ENCODE measurements at regions of chr2 and their contacts with region 1.

Region 1: GRCh38 chr2:230864598-230865306 is at the start of gene ITM2C:
- DNase-seq: peak; percentile 67 to 78 (median 75)
- ATAC-seq: peak; percentile 92
- H3K4me3 ChIP-seq: peak within 1 kb of the TSS; percentile 66
- H3K4me3 Mint-ChIP-seq: peak within 1 kb of the TSS; percentile 77 to 98 (median 94)
- H3K27ac ChIP-seq: peak within 1 kb of the TSS; percentile 54
- H3K27ac Mint-ChIP-seq: peak within 1 kb of the TSS; percentile 28 to 92 (median 81)
- H3K4me1 ChIP-seq: peaks cover 24 to 27% of the 10 kb centered on the region in 2 donors
- H3K4me1 Mint-ChIP-seq: peaks cover 24 to 50% (median 46%) of the 10 kb centered on the region in 7 donors
- H3K27me3 ChIP-seq: no peaks in the 10 kb centered on the region
- H3K27me3 Mint-ChIP-seq: peaks cover 0 to 64% (median 2%) of the 10 kb centered on the region in 5 donors
- total RNA-seq, gene ITM2C: 7.4 to 27.7 (median 24.7) TPM

Region 2: DNA sequence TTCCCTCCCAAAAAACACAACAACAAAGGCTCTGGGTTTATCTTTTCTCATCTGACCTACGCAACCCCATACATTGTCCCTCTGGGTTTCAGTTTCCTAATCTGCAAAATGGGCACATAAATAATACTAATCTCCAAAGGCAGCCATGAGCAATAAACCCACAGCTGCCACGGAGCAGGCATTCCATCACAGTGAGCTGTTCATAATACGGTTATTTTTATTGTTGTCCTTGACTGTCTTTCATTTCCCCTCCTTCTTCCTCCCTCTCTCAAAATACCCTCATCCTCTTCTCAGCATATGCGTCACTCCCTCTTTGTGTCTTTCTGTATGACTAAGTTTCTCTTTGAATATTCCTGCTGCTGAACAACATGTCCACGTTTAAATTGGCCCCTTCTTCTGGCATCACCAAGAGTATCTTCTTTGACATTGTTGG is 281.9 kb before region 1 on chr2:
- CTCF ChIA-PET with region 1: no interaction called
- POLR2A ChIA-PET with region 1: no interaction called
- intact Hi-C with region 1: no loop called
- DNase-seq: no peak
- ATAC-seq: no peak
- H3K4me3 ChIP-seq: no peak overlapping the region
- H3K4me3 Mint-ChIP-seq: peak overlapping the region in 1 of 10 donors; percentile 46
- H3K27ac ChIP-seq: no peak overlapping the region
- H3K27ac Mint-ChIP-seq: peak overlapping the region in 2 of 9 donors; percentile 41 to 76
- H3K4me1 ChIP-seq: peaks cover 0 to 7% of the 10 kb centered on the region in 2 donors
- H3K4me1 Mint-ChIP-seq: peaks cover 6 to 32% (median 22%) of the 10 kb centered on the region in 7 donors
- H3K27me3 ChIP-seq: no peaks in the 10 kb centered on the region
- H3K27me3 Mint-ChIP-seq: no peaks in the 10 kb centered on the region

Region 3: GRCh38 chr2:230814616-230815015 is 50.1 kb before region 1 on chr2:
- CTCF ChIA-PET with region 1: no interaction called
- POLR2A ChIA-PET with region 1: no interaction called
- intact Hi-C with region 1: no loop called
- DNase-seq: no peak
- ATAC-seq: no peak
- H3K4me3 ChIP-seq: no peak overlapping the region
- H3K4me3 Mint-ChIP-seq: no peak overlapping the region
- H3K27ac ChIP-seq: no peak overlapping the region
- H3K27ac Mint-ChIP-seq: peak overlapping the region in 7 of 9 donors; percentile 12 to 76 (median 70)
- H3K4me1 ChIP-seq: no peaks in the 10 kb centered on the region
- H3K4me1 Mint-ChIP-seq: peaks cover 0 to 36% (median 19%) of the 10 kb centered on the region in 7 donors
- H3K27me3 ChIP-seq: no peaks in the 10 kb centered on the region
- H3K27me3 Mint-ChIP-seq: no peaks in the 10 kb centered on the region

Region 4: GRCh38 chr2:230847883-230848388 is 16.8 kb before region 1 on chr2:
- CTCF ChIA-PET with region 1: interaction called, 11 read pairs
- POLR2A ChIA-PET with region 1: no interaction called
- intact Hi-C with region 1: loop called in 1 of 2 experiments (anchors 1 kb)
- DNase-seq: peak; percentile 53 to 90 (median 75)
- ATAC-seq: peak; percentile 94
- H3K4me3 ChIP-seq: no peak overlapping the region
- H3K4me3 Mint-ChIP-seq: peak overlapping the region in 3 of 10 donors; percentile 18 to 68 (median 37)
- H3K27ac ChIP-seq: no peak overlapping the region
- H3K27ac Mint-ChIP-seq: peak overlapping the region in 1 of 9 donors; percentile 18
- H3K4me1 ChIP-seq: peaks cover 0 to 3% of the 10 kb centered on the region in 2 donors
- H3K4me1 Mint-ChIP-seq: peaks cover 3 to 12% (median 6%) of the 10 kb centered on the region in 7 donors
- H3K27me3 ChIP-seq: no peaks in the 10 kb centered on the region
- H3K27me3 Mint-ChIP-seq: peaks cover 10 to 58% (median 32%) of the 10 kb centered on the region in 5 donors

Region 5: GRCh38 chr2:230877732-230878598 is 13.2 kb after region 1 on chr2:
- CTCF ChIA-PET with region 1: interaction called, 3 read pairs
- POLR2A ChIA-PET with region 1: interaction called, 4 read pairs
- intact Hi-C with region 1: loop called in 1 of 2 experiments (anchors 1 kb)
- DNase-seq: peak in 1 of 9 donors; percentile 5
- ATAC-seq: peak; percentile 84
- H3K4me3 ChIP-seq: no peak overlapping the region
- H3K4me3 Mint-ChIP-seq: peak overlapping the region in 2 of 10 donors; percentile 29 to 37
- H3K27ac ChIP-seq: no peak overlapping the region
- H3K27ac Mint-ChIP-seq: peak overlapping the region in 1 of 9 donors; percentile 4
- H3K4me1 ChIP-seq: peaks cover 6 to 18% of the 10 kb centered on the region in 2 donors
- H3K4me1 Mint-ChIP-seq: peaks cover 0 to 15% (median 10%) of the 10 kb centered on the region in 7 donors
- H3K27me3 ChIP-seq: no peaks in the 10 kb centered on the region
- H3K27me3 Mint-ChIP-seq: no peaks in the 10 kb centered on the region

Region 6: DNA sequence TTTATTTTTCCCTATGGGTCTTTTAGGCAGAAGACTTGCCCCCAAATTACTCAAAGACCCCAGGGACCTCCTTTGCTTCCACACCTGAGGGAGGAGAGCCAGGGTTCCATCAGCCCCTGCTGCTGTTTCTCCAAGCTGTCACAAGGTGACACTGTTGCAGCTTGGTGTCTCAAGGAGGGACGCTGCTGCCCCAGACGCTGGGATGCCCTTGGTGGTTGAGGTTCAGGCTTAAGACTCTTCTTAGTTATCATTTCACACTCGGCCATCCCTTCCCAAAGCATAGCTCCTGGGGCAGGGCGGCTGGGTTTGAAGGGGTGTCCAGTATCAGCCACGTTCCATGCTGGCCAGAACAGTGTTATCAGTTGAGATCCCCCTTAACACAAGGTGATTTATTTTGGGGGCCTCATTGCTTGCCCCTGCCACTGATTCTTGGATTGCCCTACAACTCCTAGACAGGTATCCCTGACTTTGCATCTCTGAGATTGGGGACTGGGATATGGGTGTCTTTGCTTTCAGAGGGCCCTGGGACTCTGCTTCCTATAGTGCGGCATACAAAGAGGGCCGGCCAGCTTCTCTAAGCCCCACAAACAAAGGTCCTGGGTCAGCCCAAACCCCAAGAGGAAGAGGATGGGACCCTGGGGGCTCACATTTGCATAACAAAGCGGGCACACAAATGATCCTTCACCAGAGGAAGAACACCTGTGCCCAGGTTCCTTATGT is 37.6 kb after region 1 on chr2:
- CTCF ChIA-PET with region 1: interaction called, 3 read pairs
- POLR2A ChIA-PET with region 1: no interaction called
- intact Hi-C with region 1: loop called in 1 of 2 experiments (anchors 1 kb)
- DNase-seq: peak in 4 of 9 donors; percentile 22 to 49 (median 32)
- ATAC-seq: peak; percentile 71
- H3K4me3 ChIP-seq: no peak overlapping the region
- H3K4me3 Mint-ChIP-seq: no peak overlapping the region
- H3K27ac ChIP-seq: no peak overlapping the region
- H3K27ac Mint-ChIP-seq: peak overlapping the region in 1 of 9 donors; percentile 21
- H3K4me1 ChIP-seq: peaks cover 6 to 13% of the 10 kb centered on the region in 2 donors
- H3K4me1 Mint-ChIP-seq: peaks cover 2 to 25% (median 23%) of the 10 kb centered on the region in 7 donors
- H3K27me3 ChIP-seq: no peaks in the 10 kb centered on the region
- H3K27me3 Mint-ChIP-seq: peaks cover 0 to 46% (median 6%) of the 10 kb centered on the region in 5 donors

Region 7: GRCh38 chr2:230913406-230914143 is 48.8 kb after region 1 on chr2:
- CTCF ChIA-PET with region 1: interaction called, 3 read pairs
- POLR2A ChIA-PET with region 1: interaction called, 4 read pairs
- intact Hi-C with region 1: loop called in 1 of 2 experiments (anchors 1 kb)
- DNase-seq: peak in 4 of 9 donors; percentile 22 to 36 (median 29)
- ATAC-seq: peak; percentile 78
- H3K4me3 ChIP-seq: no peak overlapping the region
- H3K4me3 Mint-ChIP-seq: no peak overlapping the region
- H3K27ac ChIP-seq: no peak overlapping the region
- H3K27ac Mint-ChIP-seq: peak overlapping the region in 1 of 9 donors; percentile 7
- H3K4me1 ChIP-seq: no peaks in the 10 kb centered on the region
- H3K4me1 Mint-ChIP-seq: peaks cover 0 to 27% (median 15%) of the 10 kb centered on the region in 7 donors
- H3K27me3 ChIP-seq: no peaks in the 10 kb centered on the region
- H3K27me3 Mint-ChIP-seq: peaks cover 0 to 56% (median 3%) of the 10 kb centered on the region in 5 donors

Region 8: DNA sequence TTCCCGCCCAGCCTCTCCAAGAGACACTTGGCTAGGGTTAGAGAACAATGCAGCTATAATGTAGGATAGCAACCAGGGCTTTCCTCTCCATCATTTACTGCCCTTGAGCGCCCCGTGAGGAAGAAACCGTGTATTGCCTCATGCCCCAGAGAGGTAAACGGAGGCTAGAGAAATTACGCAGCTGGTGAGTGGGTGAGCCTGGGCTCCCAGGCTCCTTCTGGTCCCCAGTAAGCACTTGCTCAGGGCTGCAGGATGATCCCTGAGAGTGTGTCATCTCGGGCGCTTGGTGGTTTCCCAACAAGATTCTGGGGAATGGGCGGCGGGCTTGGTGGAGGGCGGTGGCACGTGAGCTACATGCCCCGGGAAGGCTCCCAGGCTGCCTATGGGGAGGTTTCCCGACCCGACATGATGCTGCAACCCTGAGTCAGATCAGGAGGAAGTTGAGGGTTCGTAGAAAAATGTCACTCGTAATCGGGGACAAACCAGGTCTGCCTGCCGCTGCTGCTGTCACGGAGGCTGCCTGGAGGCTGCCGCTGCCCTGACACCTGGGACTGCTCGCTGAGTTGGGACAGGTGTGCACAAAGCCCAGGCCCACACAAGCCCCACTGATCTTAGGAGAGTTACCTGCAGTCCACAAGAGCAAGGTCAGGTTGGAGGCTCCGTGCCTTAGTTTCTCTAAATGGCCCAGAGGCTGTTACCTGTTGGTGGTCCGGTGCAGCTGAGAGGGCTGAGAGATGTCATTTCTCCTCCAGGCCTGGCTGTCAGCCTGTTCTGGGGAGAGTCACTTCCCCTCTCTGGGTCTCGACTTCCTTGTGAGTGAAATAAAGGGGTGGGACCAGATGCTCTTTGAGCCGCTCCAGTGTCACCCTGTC is 60.0 kb after region 1 on chr2 and contains the start of gene GPR55:
- CTCF ChIA-PET with region 1: no interaction called
- POLR2A ChIA-PET with region 1: no interaction called
- intact Hi-C with region 1: loop called in 1 of 2 experiments (anchors 1 kb)
- DNase-seq: peak in 7 of 9 donors; percentile 27 to 68 (median 39)
- ATAC-seq: peak; percentile 78
- H3K4me3 ChIP-seq: peak within 1 kb of the TSS; percentile 63
- H3K4me3 Mint-ChIP-seq: peak within 1 kb of the TSS; percentile 80 to 89 (median 86)
- H3K27ac ChIP-seq: peak within 1 kb of the TSS; percentile 58
- H3K27ac Mint-ChIP-seq: peak within 1 kb of the TSS; percentile 58 to 92 (median 86)
- H3K4me1 ChIP-seq: peaks cover 5 to 11% of the 10 kb centered on the region in 2 donors
- H3K4me1 Mint-ChIP-seq: peaks cover 28 to 50% (median 38%) of the 10 kb centered on the region in 7 donors
- H3K27me3 ChIP-seq: no peaks in the 10 kb centered on the region
- H3K27me3 Mint-ChIP-seq: peaks cover 0 to 30% (median 0%) of the 10 kb centered on the region in 5 donors
- total RNA-seq, gene GPR55: 1.3 to 8.8 (median 2.5) TPM

Region 9: DNA sequence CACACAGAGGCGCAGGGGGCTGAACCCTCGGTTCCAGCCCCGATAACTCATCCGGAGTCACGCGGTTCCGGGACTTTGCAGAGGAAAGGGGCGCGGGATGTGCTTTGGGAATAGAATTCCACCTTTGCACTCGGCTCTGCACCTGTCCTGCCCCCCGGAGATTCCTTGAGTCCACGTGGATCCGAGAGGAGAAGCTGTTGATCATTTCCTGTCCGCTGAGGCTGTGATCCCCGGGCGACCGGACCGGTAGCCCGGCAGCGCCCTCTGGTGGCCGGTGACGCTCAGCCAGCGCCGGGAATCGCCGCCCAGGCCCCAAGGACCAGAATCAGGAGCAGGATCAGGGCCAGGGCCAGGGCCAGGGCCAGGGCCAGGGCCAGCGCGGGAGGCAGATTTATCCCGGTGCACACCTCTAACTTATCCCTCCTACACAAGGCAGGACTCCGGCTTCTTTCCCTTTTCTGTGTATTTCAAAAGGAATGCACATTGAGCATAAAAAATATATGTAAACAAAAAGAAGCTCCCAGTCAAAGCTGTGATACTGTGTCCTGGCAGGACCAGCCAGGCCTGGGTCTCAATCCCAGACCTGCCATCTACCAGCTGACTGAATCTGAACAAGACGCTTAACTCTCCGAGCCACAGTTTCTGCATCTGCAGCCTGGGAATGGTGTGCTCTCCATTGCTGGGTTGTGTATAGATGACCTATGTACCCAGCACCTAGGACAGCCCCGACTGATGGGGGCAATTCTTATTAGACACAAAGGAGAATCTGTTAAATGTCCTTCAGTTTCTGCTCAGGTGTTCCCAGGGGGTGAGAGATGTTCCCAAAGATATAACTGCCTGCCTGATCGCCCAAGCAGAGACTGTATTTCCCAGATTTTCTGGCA is 122.6 kb after region 1 on chr2:
- CTCF ChIA-PET with region 1: interaction called, 4 read pairs
- POLR2A ChIA-PET with region 1: interaction called, 3 read pairs
- intact Hi-C with region 1: loop called in 1 of 2 experiments (anchors 1 kb)
- DNase-seq: peak; percentile 54 to 86 (median 68)
- ATAC-seq: peak; percentile 87
- H3K4me3 ChIP-seq: peak overlapping the region; percentile 59
- H3K4me3 Mint-ChIP-seq: peak overlapping the region; percentile 19 to 68 (median 47)
- H3K27ac ChIP-seq: no peak overlapping the region
- H3K27ac Mint-ChIP-seq: peak overlapping the region in 1 of 9 donors; percentile 40
- H3K4me1 ChIP-seq: peaks cover 4 to 11% of the 10 kb centered on the region in 2 donors
- H3K4me1 Mint-ChIP-seq: peaks cover 0 to 34% (median 3%) of the 10 kb centered on the region in 7 donors
- H3K27me3 ChIP-seq: no peaks in the 10 kb centered on the region
- H3K27me3 Mint-ChIP-seq: peaks cover 6 to 37% (median 13%) of the 10 kb centered on the region in 5 donors

Region 10: GRCh38 chr2:231348173-231348572 is 483.4 kb after region 1 on chr2:
- CTCF ChIA-PET with region 1: no interaction called
- POLR2A ChIA-PET with region 1: no interaction called
- intact Hi-C with region 1: no loop called
- DNase-seq: no peak
- ATAC-seq: no peak
- H3K4me3 ChIP-seq: no peak overlapping the region
- H3K4me3 Mint-ChIP-seq: no peak overlapping the region
- H3K27ac ChIP-seq: no peak overlapping the region
- H3K27ac Mint-ChIP-seq: no peak overlapping the region
- H3K4me1 ChIP-seq: no peaks in the 10 kb centered on the region
- H3K4me1 Mint-ChIP-seq: peaks cover 0 to 2% (median 0%) of the 10 kb centered on the region in 7 donors
- H3K27me3 ChIP-seq: no peaks in the 10 kb centered on the region
- H3K27me3 Mint-ChIP-seq: peaks cover 0 to 31% (median 4%) of the 10 kb centered on the region in 5 donors